ENCODE measurements at regions of chr14 and their contacts with region 1.

Region 1: GRCh38 chr14:50335389-50335788 is 23.3 kb downstream of the DMAC2L start:
- DNase-seq: no peak
- H3K4me3 ChIP-seq: no peak overlapping the region
- H3K27ac ChIP-seq: peak overlapping the region; percentile 37 to 88 (median 80)
- H3K4me1 ChIP-seq: peaks cover 13 to 31% (median 19%) of the 10 kb centered on the region in 6 donors
- H3K27me3 ChIP-seq: no peaks in the 10 kb centered on the region
- CTCF ChIP-seq: peak in 1 of 11 experiments; percentile 23
- POLR2A ChIP-seq: no peak

Region 2: GRCh38 chr14:49677643-49678042 is 657.7 kb before region 1 on chr14:
- intact Hi-C with region 1: no loop called
- DNase-seq: no peak
- H3K4me3 ChIP-seq: no peak overlapping the region
- H3K27ac ChIP-seq: no peak overlapping the region
- H3K4me1 ChIP-seq: no peaks in the 10 kb centered on the region
- H3K27me3 ChIP-seq: no peaks in the 10 kb centered on the region
- CTCF ChIP-seq: no peak
- POLR2A ChIP-seq: no peak

Region 3: GRCh38 chr14:50396631-50397390 is 61.4 kb after region 1 on chr14 and contains the start of gene CDKL1:
- intact Hi-C with region 1: loop called (anchors 10 kb)
- DNase-seq: peak; percentile 91
- H3K4me3 ChIP-seq: peak within 1 kb of the TSS; percentile 57 to 82 (median 70)
- H3K27ac ChIP-seq: peak within 1 kb of the TSS; percentile 28 to 88 (median 82)
- H3K4me1 ChIP-seq: peaks cover 0 to 61% (median 19%) of the 10 kb centered on the region in 6 donors
- H3K27me3 ChIP-seq: peaks cover 0 to 4% (median 0%) of the 10 kb centered on the region in 7 donors
- CTCF ChIP-seq: no peak
- POLR2A ChIP-seq: peak in 1 of 3 donors; percentile 18
- total RNA-seq, gene CDKL1: 9.2 to 310 (median 27.8) TPM